Right ventricle myocardium superior (tissue), 1 donor: ENCODE measurements at regions of chr13 and their contacts with region 1.

Region 1: GRCh38 chr13:33285420-33286124 is at the start of gene STARD13:
- DNase-seq: peak; percentile 95
- ATAC-seq: peak; percentile 91
- total RNA-seq, gene STARD13: 36.4 TPM

Region 2: DNA sequence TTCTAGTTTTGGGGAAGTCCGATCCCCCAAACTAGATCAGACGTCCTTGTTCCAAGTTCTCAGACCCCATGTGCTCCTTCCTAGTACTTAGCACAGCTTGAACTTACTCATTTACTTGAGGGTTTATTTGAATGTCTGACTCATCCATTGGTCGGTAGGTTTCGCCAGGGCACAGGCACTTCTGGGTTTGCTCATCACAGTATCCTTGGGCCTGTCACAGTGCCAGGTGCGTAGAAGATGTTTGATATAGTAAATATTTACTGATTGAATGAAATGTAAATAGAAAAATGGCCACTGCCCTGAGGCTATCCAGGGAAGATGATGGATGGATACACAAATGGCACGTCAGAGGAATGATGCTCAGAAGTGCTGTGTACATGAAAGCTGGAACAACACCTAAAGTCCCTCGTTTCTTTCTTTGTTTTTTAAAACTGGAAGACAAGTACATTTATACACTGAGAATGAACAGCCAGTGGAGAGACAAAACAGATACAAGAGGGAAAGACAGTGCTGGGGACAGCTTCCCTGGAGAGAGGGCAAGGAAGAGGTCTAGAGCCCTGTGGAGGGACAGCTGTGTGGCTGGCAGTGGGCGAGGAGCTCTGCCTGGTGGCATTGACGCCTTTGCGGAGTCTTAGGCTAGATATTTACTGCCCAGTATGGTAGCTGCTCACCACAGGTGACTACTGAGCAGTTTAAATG is 300.6 kb before region 1 on chr13:
- intact Hi-C with region 1: no loop called
- DNase-seq: no peak
- ATAC-seq: no peak

Region 3: GRCh38 chr13:33125821-33126570 is 159.6 kb before region 1 on chr13:
- intact Hi-C with region 1: loop called (anchors 2 kb)
- DNase-seq: peak; percentile 67
- ATAC-seq: peak; percentile 85

Region 4: GRCh38 chr13:33229446-33230177 is 56.0 kb before region 1 on chr13:
- intact Hi-C with region 1: loop called (anchors 10 kb)
- DNase-seq: peak; percentile 64
- ATAC-seq: peak; percentile 37

Region 5: GRCh38 chr13:33542283-33543088 is 256.9 kb after region 1 on chr13:
- intact Hi-C with region 1: loop called (anchors 10 kb)
- DNase-seq: peak; percentile 99
- ATAC-seq: peak; percentile 95